ENCODE measurements at regions of chr16 and their contacts with region 1.

Region 1: DNA sequence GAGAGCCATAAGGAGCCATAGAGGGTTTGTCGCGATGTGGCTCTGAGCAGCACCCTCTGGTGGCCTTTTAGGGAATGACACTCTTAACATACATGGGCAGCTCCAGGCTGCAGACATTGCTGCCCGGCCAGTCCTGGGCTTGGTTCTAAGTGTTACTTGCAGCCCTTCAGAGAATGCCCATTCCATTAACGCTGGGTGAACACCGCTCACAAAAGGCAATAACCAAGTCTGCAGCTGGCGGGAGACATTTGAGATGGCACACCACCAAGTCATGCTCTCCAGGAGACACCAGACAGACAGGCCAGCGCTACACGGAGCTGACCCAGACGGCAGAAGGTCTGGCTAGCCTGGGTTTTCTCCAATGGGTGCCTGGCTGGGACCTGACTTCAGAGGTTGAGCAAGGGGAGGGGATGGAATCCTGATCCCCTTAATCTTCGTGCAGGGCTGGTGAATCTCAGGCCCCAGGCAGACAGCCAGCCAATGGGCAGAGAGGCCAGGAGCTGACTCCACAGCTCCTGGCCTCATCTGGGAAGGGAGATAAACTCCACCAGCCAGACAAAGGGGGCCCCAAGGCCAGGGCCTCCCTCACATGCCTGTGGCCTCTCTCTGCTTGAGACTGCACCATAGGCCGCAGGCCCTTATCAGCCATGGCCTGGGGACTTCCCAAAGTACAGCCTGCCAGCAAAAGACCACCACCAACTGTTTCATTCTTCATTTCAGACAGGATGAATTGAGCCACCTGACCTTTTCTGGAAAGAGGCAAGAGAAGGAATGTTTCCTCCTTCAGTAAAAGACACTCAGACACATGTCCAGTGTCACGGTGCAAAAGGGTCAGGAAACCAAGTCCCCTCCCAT is 58.8 kb downstream of the ZDHHC7 start:
- DNase-seq: peak; percentile 83
- ATAC-seq: peak; percentile 87
- H3K4me3 ChIP-seq: no peak overlapping the region
- H3K4me3 Mint-ChIP-seq: no peak overlapping the region
- H3K27ac ChIP-seq: no peak overlapping the region
- H3K27ac Mint-ChIP-seq: no peak overlapping the region
- H3K4me1 ChIP-seq: peaks cover 0 to 14% of the 10 kb centered on the region in 2 donors
- H3K4me1 Mint-ChIP-seq: peaks cover 6% of the 10 kb centered on the region
- H3K27me3 ChIP-seq: peaks cover 0 to 14% (median 4%) of the 10 kb centered on the region in 4 experiments
- H3K27me3 Mint-ChIP-seq: peaks cover 12% of the 10 kb centered on the region
- CTCF ChIP-seq: peak; percentile 85

Region 2: DNA sequence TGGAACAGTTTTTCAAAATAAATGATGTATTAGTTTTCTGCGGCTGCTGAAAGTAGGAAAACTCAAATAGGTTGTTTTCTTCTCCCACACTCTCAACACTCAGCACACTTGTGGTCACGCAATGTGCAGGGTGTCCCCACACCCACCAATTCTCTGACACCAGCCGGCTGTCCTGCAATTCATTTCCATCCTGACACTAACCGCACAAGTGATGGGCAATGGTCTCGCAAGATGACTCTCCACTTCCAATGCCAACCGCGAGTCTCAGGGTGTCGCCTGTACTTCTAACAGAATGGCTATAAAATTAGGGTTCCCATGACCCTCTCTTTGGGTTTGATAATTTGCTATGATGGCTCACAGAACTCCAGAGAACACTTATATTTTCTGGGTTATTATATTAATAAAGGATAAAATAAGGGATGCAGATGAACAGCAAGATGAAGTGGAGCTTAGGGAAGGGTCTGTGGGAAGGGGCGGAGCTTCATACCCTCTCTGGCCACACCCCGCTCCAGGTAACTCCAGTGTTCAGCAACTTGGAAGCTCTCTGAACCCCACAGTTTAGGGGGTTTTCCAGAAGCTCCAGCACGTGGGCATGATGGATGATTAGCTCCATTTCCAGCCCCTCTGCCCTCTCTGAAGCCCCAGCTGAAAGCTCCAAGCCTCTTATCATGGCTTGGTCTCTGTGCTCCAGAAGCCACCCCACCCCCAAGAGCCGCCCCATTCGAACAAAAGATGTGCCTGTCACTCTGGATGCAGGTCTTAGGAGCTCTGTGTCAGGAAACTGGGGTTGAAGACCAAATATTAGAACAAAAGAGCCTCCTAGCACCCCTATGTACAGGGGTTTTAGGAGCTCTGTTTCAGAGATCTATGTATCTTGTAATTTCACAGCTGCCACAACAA is 785.5 kb before region 1 on chr16:
- CTCF ChIA-PET with region 1: no interaction called
- POLR2A ChIA-PET with region 1: no interaction called
- intact Hi-C with region 1: no loop called
- DNase-seq: no peak
- ATAC-seq: no peak
- H3K4me3 ChIP-seq: no peak overlapping the region
- H3K4me3 Mint-ChIP-seq: no peak overlapping the region
- H3K27ac ChIP-seq: no peak overlapping the region
- H3K27ac Mint-ChIP-seq: no peak overlapping the region
- H3K4me1 ChIP-seq: no peaks in the 10 kb centered on the region
- H3K4me1 Mint-ChIP-seq: no peaks in the 10 kb centered on the region
- H3K27me3 ChIP-seq: peaks cover 0 to 9% (median 0%) of the 10 kb centered on the region in 4 experiments
- H3K27me3 Mint-ChIP-seq: peaks cover 32% of the 10 kb centered on the region
- CTCF ChIP-seq: no peak

Region 3: DNA sequence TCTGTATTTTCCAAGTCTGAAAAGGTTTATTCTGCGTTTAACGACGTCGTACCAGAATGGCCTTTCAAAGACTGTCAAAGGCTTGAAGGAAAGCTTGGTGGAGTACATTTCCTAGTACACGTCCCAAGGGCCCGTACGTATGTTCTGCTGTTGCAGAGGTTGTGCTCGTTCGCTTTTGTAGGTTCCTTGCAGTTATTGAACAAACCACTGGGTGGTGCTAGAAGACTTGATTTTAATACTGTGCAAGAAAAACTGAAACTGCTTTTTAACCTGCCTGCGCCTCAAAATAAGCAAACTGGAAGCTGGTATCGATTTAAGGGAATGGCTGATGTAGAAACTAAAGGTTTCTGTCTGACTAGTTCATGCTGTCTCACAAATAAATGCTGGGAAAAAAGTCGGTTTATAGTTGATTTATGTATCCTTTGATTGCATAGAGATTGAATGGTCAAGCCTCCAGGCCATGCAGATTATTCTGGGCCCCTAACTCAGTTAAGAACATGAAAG is 198.2 kb before region 1 on chr16:
- CTCF ChIA-PET with region 1: interaction called, 138 read pairs
- POLR2A ChIA-PET with region 1: interaction called, 4 read pairs
- intact Hi-C with region 1: loop called (anchors 1 kb)
- DNase-seq: peak; percentile 89
- ATAC-seq: peak; percentile 88
- H3K4me3 ChIP-seq: peak overlapping the region in 1 of 5 experiments; percentile 21
- H3K4me3 Mint-ChIP-seq: peak overlapping the region; percentile 12
- H3K27ac ChIP-seq: no peak overlapping the region
- H3K27ac Mint-ChIP-seq: peak overlapping the region; percentile 57
- H3K4me1 ChIP-seq: peaks cover 44 to 47% of the 10 kb centered on the region in 2 donors
- H3K4me1 Mint-ChIP-seq: peaks cover 72% of the 10 kb centered on the region
- H3K27me3 ChIP-seq: no peaks in the 10 kb centered on the region
- H3K27me3 Mint-ChIP-seq: no peaks in the 10 kb centered on the region
- CTCF ChIP-seq: peak; percentile 91

Region 4: DNA sequence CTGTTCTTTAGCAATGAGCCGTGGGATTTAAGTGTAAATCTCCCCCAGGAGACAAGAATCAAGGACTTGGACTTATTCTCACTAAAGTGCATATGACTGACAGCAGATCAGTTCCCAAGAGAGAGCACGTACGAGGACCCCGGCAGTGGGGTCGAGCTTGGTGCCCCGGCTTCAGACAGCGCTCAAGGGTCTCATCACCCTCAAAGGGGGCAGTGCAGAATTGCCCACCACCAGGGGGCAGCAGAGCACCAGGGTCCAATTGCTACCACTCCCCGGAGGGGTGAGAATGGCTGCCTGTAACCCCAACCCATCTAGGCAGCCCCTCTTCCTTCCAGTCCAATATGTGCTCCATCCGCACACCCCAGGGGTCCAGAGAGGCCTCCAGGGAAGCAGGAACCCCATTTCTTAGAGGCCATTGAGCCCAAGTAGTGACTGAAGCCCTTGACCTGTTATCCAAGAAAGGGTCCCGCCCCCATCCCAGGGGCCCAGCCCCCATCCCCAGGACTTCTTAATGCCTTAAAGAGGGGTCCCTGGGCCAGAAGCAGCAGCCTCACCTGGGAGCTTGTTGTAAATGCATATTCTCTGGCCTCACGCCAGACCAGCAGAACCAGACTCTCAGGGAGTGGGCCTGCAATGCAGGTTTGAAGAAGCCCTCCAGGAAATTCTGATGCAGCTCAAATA is 27.3 kb before region 1 on chr16:
- CTCF ChIA-PET with region 1: interaction called, 21 read pairs
- POLR2A ChIA-PET with region 1: no interaction called
- intact Hi-C with region 1: loop called (anchors 1 kb)
- DNase-seq: peak; percentile 66
- ATAC-seq: peak; percentile 53
- H3K4me3 ChIP-seq: no peak overlapping the region
- H3K4me3 Mint-ChIP-seq: no peak overlapping the region
- H3K27ac ChIP-seq: no peak overlapping the region
- H3K27ac Mint-ChIP-seq: no peak overlapping the region
- H3K4me1 ChIP-seq: no peaks in the 10 kb centered on the region
- H3K4me1 Mint-ChIP-seq: peaks cover 1% of the 10 kb centered on the region
- H3K27me3 ChIP-seq: no peaks in the 10 kb centered on the region
- H3K27me3 Mint-ChIP-seq: peaks cover 8% of the 10 kb centered on the region
- CTCF ChIP-seq: peak; percentile 81

Region 5: DNA sequence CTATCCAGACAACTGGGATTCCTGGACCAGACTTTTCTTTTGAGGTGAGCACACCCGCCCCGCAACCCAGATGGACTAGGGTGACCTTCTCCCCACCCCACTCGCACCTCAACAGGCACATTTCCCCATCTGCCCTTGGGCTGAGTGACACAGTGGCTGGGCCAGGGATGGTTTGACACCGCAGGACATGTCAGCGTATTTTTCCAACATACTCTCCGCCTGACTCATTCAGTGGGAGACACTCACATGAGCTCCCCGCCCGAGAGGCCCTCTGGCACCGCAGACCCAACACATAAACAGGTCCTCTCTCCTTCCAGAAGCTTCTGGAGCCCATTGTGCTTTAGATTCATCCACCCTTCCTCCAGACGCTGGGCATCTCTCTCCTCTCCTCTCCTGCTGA is 10.6 kb before region 1 on chr16:
- CTCF ChIA-PET with region 1: interaction called, 16 read pairs
- POLR2A ChIA-PET with region 1: no interaction called
- intact Hi-C with region 1: no loop called
- DNase-seq: no peak
- ATAC-seq: no peak
- H3K4me3 ChIP-seq: no peak overlapping the region
- H3K4me3 Mint-ChIP-seq: no peak overlapping the region
- H3K27ac ChIP-seq: no peak overlapping the region
- H3K27ac Mint-ChIP-seq: no peak overlapping the region
- H3K4me1 ChIP-seq: peaks cover 0 to 3% of the 10 kb centered on the region in 2 donors
- H3K4me1 Mint-ChIP-seq: peaks cover 3% of the 10 kb centered on the region
- H3K27me3 ChIP-seq: no peaks in the 10 kb centered on the region
- H3K27me3 Mint-ChIP-seq: peaks cover 29% of the 10 kb centered on the region
- CTCF ChIP-seq: no peak

Region 6: GRCh38 chr16:84970447-84971127 is 18.0 kb after region 1 on chr16:
- CTCF ChIA-PET with region 1: interaction called, 10 read pairs
- POLR2A ChIA-PET with region 1: no interaction called
- intact Hi-C with region 1: no loop called
- DNase-seq: peak; percentile 83
- ATAC-seq: peak; percentile 80
- H3K4me3 ChIP-seq: no peak overlapping the region
- H3K4me3 Mint-ChIP-seq: no peak overlapping the region
- H3K27ac ChIP-seq: no peak overlapping the region
- H3K27ac Mint-ChIP-seq: no peak overlapping the region
- H3K4me1 ChIP-seq: peaks cover 3 to 5% of the 10 kb centered on the region in 2 donors
- H3K4me1 Mint-ChIP-seq: peaks cover 4% of the 10 kb centered on the region
- H3K27me3 ChIP-seq: peaks cover 0 to 7% (median 0%) of the 10 kb centered on the region in 4 experiments
- H3K27me3 Mint-ChIP-seq: peaks cover 3% of the 10 kb centered on the region
- CTCF ChIP-seq: peak; percentile 92